ENCODE measurements at regions of chr19 and their contacts with region 1.

Region 1: GRCh38 chr19:52570000-52570861 is at the start of gene ZNF701:
- DNase-seq: peak; percentile 95 to 97
- ATAC-seq: peak; percentile 100
- H3K4me3 ChIP-seq: peak within 1 kb of the TSS; percentile 48 to 87 (median 73)
- H3K27ac ChIP-seq: peak within 1 kb of the TSS; percentile 6 to 91 (median 82)
- H3K4me1 ChIP-seq: peaks cover 4 to 17% (median 12%) of the 10 kb centered on the region in 9 donors
- H3K27me3 ChIP-seq: no peaks in the 10 kb centered on the region
- CTCF ChIP-seq: peak in 8 of 9 donors; percentile 22 to 61 (median 47)
- total RNA-seq, gene ZNF701: 11.3 to 27.9 (median 20.3) TPM

Region 2: DNA sequence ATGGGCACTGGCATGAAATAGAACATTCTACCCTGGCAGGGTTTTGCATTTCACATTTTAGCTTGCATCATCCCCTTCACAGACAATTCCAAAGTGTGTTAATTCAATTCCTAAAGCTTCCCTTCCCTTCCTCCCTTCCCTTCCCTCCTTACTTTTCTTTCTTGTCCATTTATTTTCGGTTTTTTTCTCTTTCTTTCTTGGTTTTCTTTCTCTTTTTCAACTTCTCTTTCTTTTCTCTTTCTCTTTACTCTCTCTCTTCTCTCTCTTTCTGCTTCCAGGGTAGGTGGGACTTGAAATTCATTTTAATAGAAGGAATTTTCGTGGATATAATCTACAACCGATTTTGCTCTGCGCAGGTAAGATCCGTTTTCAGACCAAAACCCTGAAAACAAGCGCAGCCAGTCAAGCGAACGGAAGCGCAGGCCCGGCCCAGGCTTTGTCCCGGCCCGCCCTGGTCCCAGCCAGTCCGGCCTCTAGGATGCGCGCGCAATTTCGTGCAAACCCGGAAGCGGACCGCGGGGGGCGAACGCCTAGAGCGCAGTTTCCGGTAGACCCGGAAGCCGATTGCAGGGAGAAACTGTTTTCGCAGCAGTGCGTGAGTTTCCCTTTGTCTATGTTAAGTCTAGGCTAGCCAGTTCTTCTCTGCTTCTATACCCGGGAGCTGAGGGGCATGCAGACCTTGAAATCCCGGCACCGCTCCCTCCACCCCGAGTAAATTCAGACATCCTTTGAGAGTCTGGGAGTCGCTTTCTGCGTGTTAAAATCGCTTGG is 172.7 kb before region 1 on chr19 and contains the start of gene ZNF528:
- intact Hi-C with region 1: loop called in 1 of 10 experiments (anchors 10 kb)
- DNase-seq: peak; percentile 98
- ATAC-seq: peak; percentile 100
- H3K4me3 ChIP-seq: peak within 1 kb of the TSS; percentile 54 to 84 (median 72)
- H3K27ac ChIP-seq: peak within 1 kb of the TSS; percentile 57 to 90 (median 78)
- H3K4me1 ChIP-seq: peaks cover 11 to 21% (median 17%) of the 10 kb centered on the region in 9 donors
- H3K27me3 ChIP-seq: no peaks in the 10 kb centered on the region
- CTCF ChIP-seq: no peak
- total RNA-seq, gene ZNF528: 10.2 to 26.7 (median 17.4) TPM

Region 3: DNA sequence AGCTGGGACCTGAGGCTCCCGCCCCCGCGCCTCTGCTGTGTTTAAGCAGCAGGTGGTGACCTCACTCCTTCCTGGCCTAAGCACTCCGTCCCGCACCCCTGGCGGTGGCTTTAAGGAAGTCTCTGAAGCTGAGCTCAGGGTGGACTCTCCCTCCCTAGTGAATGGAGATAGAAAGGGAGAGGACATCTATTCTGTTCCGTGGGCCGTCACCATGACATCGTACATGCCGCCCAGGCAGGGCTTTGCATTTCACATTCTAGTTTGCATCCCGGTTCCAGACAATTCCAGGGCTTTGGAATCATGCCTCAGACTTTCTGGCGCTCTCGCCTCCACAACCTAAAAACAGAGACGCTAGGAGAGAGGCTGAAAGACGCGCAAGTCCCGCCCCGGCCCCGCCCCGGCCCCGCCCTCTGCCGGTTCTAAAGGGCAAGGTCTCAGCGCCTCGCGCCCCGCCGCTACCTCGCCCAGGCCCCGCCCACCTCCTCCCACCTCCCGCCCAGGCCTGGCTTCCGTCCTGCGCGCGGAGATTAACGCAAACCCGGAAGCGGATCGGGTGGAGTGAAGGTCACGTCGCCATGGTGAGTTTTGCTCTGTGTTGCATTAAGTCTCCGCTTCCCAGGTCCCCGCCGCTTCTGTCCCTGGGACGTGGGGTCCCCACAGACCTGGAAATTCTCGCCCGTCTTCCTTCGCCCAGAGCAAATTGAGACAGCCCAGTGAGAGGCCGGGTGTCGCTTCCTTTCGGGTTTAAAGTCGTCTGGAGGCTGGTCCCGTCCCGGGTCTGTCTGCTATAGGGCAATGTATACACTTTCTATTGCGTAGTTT is 42.9 kb before region 1 on chr19 and contains the start of gene ZNF808:
- intact Hi-C with region 1: loop called in 4 of 10 experiments (anchors 1 to 10 kb)
- DNase-seq: peak; percentile 97 to 99
- ATAC-seq: peak; percentile 97 to 99 (median 98)
- H3K4me3 ChIP-seq: peak within 1 kb of the TSS; percentile 52 to 94 (median 78)
- H3K27ac ChIP-seq: peak within 1 kb of the TSS; percentile 81 to 99 (median 96)
- H3K4me1 ChIP-seq: peaks cover 3 to 28% (median 17%) of the 10 kb centered on the region in 9 donors
- H3K27me3 ChIP-seq: no peaks in the 10 kb centered on the region
- CTCF ChIP-seq: peak; percentile 44 to 80 (median 62)
- total RNA-seq, gene ZNF808: 18.0 to 44.0 (median 32.9) TPM

Region 4: DNA sequence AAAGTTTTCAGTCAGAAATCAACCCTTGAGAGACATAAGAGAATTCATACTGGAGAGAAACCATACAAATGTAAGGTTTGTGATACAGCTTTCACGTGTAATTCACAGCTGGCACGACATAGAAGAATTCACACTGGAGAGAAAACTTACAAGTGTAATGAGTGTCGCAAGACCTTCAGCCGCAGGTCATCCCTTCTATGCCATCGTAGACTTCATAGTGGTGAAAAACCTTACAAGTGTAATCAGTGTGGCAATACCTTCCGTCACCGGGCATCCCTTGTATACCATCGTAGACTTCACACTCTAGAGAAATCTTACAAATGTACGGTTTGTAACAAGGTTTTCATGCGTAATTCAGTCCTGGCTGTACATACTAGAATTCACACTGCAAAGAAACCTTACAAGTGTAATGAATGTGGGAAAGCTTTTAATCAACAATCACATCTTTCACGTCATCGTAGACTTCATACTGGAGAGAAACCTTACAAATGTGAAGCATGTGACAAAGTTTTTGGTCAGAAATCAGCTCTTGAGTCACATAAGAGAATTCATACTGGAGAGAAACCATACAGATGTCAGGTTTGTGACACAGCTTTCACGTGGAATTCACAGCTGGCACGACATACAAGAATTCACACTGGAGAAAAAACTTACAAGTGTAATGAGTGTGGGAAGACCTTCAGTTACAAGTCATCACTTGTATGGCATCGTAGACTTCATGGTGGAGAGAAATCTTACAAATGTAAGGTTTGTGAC is 15.8 kb before region 1 on chr19:
- intact Hi-C with region 1: no loop called
- DNase-seq: no peak
- ATAC-seq: no peak
- H3K4me3 ChIP-seq: no peak overlapping the region
- H3K27ac ChIP-seq: no peak overlapping the region
- H3K4me1 ChIP-seq: no peaks in the 10 kb centered on the region
- H3K27me3 ChIP-seq: no peaks in the 10 kb centered on the region
- CTCF ChIP-seq: no peak

Measured in heart right ventricle (tissue), 16 donors.